MCF 10A (cell line): ENCODE measurements at regions of chr15 and their contacts with region 1.

Region 1: DNA sequence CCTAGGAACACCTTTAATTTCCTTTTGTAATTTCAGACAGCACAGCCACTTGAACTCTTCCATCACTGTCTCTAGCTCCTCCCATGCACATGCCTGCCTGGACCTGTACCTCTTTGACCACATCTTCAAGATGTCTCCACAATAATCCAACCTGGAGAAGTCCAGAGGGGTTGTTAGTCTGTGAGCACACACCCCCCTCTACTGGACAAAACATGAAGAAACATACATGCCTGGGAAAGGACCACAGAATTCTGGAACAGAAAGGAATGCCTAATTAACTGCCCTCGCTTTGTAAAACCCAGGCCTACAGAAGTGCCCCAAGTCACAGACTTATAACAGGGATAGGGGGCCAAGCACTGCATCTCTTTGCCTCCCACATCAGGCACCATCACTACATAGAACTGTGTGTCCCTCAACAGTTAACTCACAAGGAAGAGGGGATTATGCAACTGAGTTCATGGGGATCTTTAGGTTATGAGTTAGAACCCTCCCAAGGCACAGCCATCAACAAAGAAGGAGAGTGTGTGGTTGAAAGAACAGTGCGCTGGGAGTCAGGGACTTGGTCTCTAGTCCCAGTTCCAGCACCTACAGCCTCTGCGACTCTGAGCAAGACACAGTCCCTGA is 61.7 kb downstream of the FMN1 start:
- DNase-seq: peak; percentile 91
- H3K4me3 Mint-ChIP-seq: no peak overlapping the region
- H3K27ac Mint-ChIP-seq: no peak overlapping the region
- H3K4me1 Mint-ChIP-seq: peaks cover 12% of the 10 kb centered on the region
- H3K27me3 Mint-ChIP-seq: no peaks in the 10 kb centered on the region
- CTCF ChIP-seq: peak; percentile 80

Region 2: GRCh38 chr15:32844118-32844711 is 288.6 kb before region 1 on chr15:
- CTCF ChIA-PET with region 1: interaction called, 3 read pairs
- POLR2A ChIA-PET with region 1: no interaction called
- intact Hi-C with region 1: loop called (anchors 10 kb)
- DNase-seq: peak; percentile 50
- H3K4me3 Mint-ChIP-seq: no peak overlapping the region
- H3K27ac Mint-ChIP-seq: no peak overlapping the region
- H3K4me1 Mint-ChIP-seq: no peaks in the 10 kb centered on the region
- H3K27me3 Mint-ChIP-seq: no peaks in the 10 kb centered on the region
- CTCF ChIP-seq: peak; percentile 61

Region 3: DNA sequence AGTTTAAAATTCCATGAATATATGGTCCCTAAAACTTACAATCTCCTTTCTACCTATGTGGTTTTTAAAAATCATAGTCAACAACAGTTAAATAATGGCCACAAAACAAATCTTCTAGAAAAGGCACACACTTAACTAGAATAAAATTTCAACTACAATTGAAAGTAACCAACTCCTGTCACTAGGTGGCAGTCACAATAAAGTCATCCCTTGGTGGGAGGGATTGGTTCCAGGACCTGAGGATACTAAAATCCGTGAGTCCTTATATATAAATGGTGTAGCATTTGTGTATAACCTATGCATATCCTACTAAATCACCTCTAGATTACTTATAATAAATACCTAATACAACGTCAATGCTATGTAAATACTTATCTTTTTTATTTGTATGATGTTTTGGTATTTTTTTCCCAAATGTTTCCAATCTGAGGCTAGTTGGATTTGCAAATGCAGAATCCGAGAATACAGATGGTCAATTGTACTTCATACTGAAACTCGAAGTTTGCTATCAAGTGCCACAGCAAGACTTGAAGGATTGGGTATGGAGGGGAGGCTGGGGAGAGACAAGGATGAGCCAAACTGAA is 110.9 kb before region 1 on chr15:
- CTCF ChIA-PET with region 1: interaction called, 108 read pairs
- POLR2A ChIA-PET with region 1: interaction called, 10 read pairs
- intact Hi-C with region 1: loop called (anchors 1 kb)
- DNase-seq: peak; percentile 76
- H3K4me3 Mint-ChIP-seq: no peak overlapping the region
- H3K27ac Mint-ChIP-seq: peak overlapping the region; percentile 85
- H3K4me1 Mint-ChIP-seq: peaks cover 10% of the 10 kb centered on the region
- H3K27me3 Mint-ChIP-seq: no peaks in the 10 kb centered on the region
- CTCF ChIP-seq: peak; percentile 43

Region 4: GRCh38 chr15:33086507-33087121 is 46.2 kb before region 1 on chr15:
- CTCF ChIA-PET with region 1: interaction called, 292 read pairs
- POLR2A ChIA-PET with region 1: interaction called, 12 read pairs
- intact Hi-C with region 1: loop called (anchors 1 kb)
- DNase-seq: peak; percentile 63
- H3K4me3 Mint-ChIP-seq: no peak overlapping the region
- H3K27ac Mint-ChIP-seq: no peak overlapping the region
- H3K4me1 Mint-ChIP-seq: no peaks in the 10 kb centered on the region
- H3K27me3 Mint-ChIP-seq: no peaks in the 10 kb centered on the region
- CTCF ChIP-seq: peak; percentile 42

Region 5: DNA sequence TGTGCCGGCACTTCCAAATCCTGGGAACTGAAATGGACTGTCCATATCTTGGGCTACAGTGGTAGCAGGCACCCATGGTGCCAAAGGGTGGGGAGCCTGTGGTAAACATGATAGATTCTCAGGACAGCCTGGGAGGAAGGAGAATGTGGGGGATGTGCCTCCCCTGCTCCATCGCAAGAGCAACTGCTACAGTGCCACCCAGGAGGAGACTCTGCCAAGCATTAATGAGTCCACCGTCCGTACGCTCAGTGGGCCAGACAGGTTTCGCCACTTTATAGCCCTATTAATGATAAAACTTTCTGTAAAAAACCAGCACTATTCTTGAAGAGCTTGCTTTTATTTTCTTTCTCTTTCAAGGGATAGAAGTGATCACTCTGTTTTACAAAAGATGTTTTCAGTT is 13.6 kb before region 1 on chr15:
- CTCF ChIA-PET with region 1: interaction called, 14 read pairs
- POLR2A ChIA-PET with region 1: no interaction called
- intact Hi-C with region 1: no loop called
- DNase-seq: no peak
- H3K4me3 Mint-ChIP-seq: no peak overlapping the region
- H3K27ac Mint-ChIP-seq: no peak overlapping the region
- H3K4me1 Mint-ChIP-seq: no peaks in the 10 kb centered on the region
- H3K27me3 Mint-ChIP-seq: peaks cover 11% of the 10 kb centered on the region
- CTCF ChIP-seq: no peak